ENCODE measurements at regions of chr1 and their contacts with region 1.

Region 1: DNA sequence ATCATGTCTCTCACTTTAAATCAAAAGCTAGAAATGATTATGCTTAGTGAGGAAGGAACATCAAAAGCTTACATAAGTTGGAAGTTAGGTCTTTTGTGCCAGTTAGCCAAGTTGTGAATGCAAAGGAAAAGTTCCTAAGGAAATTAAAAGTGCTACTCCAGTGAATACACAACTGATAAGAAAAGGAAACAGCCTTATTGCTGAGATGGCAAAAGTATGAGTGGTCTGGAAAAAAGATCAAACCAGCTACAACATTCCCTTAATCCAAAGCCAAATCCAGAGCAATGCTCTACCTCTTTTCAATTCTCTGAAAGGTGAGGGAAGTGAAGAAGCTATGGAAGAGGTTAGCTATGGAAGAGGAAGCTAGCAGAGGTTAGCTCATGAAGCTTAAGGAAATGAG is 378.7 kb downstream of the KCNT2 start:
- DNase-seq: no peak

Region 2: GRCh38 chr1:196423612-196424011 is 194.1 kb after region 1 on chr1:
- intact Hi-C with region 1: loop called (anchors 5 kb)
- DNase-seq: no peak

Measured in cardiac septum (tissue), 1 donor.